PC-9 (cell line): ENCODE measurements at regions of chr3 and their contacts with region 1.

Region 1: DNA sequence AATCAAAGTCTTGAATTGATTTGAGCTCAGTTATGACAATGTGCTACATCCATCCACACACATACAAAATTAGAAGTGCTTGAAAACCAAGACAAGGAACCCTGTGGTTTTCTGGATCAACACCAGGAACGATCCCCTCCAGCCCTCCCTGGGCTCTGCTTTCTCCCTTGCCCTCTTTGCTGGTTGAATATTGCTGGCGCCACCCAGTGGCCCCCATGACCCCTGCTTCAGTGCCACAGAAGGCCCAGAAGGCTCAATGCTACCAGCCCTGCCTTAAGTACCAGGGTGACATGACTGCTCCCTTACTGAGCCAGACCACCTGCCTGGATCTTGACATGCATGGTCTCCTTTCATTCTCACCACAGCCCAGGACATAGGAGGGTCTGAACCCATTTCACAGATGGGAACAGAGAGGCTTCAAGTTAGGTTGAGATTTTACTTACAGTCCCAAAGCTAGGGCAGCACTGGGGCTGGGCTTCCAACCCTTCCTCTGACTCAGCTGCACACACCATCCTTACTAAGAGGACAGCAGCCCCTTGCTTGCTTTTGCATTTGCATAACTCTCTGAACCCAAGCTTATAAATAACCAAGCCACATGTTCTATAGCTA is 15.0 kb downstream of the IL12A start:
- DNase-seq: peak in 1 of 2 experiments; percentile 65
- H3K4me3 ChIP-seq: no peak overlapping the region
- H3K27ac ChIP-seq: no peak overlapping the region
- H3K4me1 ChIP-seq: no peaks in the 10 kb centered on the region
- H3K27me3 ChIP-seq: no peaks in the 10 kb centered on the region
- CTCF ChIP-seq: peak; percentile 77

Region 2: GRCh38 chr3:159616212-159616825 is 387.3 kb before region 1 on chr3:
- CTCF ChIA-PET with region 1: no interaction called
- POLR2A ChIA-PET with region 1: no interaction called
- intact Hi-C with region 1: loop called (anchors 1 kb)
- DNase-seq: peak; percentile 43 to 69
- H3K4me3 ChIP-seq: no peak overlapping the region
- H3K27ac ChIP-seq: no peak overlapping the region
- H3K4me1 ChIP-seq: peaks cover 16% of the 10 kb centered on the region
- H3K27me3 ChIP-seq: no peaks in the 10 kb centered on the region
- CTCF ChIP-seq: peak; percentile 80

Region 3: DNA sequence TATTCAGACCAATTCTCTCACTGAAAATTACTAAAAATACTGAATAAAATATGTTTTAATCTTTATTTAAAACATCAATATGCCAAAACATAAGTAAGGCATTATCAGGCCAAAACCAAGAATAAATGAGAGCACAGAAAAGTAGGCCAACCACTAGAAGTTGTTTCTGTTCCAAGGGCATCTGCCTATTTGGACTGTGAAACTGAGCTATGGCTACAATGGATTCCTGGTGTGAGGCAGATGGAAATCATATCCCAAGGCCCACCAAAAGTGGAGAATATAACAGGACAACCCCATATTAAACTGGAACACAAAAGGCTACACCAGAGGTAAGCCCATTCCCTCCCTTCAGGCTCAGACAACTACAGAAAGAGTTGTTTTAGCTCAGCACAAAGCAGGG is 317.8 kb before region 1 on chr3:
- CTCF ChIA-PET with region 1: no interaction called
- POLR2A ChIA-PET with region 1: no interaction called
- intact Hi-C with region 1: no loop called
- DNase-seq: no peak
- H3K4me3 ChIP-seq: no peak overlapping the region
- H3K27ac ChIP-seq: no peak overlapping the region
- H3K4me1 ChIP-seq: no peaks in the 10 kb centered on the region
- H3K27me3 ChIP-seq: no peaks in the 10 kb centered on the region
- CTCF ChIP-seq: no peak

Region 4: DNA sequence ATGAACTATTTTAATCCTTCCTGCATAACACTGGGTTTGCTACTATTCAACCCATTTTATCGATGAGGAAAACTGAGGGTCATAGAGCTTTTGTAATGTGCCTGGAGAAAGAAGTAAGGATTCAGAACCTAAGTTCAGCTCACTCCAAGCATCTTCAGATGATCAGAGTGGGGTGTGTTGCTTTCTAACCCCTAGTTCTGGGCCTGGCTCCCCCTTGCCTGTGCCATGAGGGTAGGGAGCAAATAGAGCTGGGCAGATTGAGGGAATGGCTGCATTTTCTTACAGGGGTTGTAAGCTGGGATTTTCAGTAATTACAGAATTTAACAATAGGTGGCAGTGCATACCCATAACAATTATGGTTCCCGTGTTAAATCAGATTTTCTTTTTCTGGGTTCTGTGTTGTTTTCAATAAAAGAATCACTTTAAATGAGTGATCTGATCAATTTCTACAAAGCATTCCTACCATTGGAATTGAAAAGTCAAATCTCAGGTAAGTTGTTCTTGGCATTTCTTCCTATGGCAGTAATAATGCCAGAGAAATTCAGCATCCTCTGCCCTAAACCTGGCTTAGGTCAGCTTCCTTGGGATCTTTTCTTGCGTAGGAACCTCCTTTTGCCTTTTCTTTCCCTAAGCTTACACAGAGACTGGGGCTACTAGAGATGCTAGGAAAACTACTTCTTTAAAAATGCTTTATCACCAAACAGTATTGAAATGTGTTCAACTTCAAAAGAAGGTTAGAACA is 118.8 kb before region 1 on chr3:
- CTCF ChIA-PET with region 1: interaction called, 70 read pairs
- POLR2A ChIA-PET with region 1: no interaction called
- intact Hi-C with region 1: loop called (anchors 1 kb)
- DNase-seq: peak; percentile 15 to 45
- H3K4me3 ChIP-seq: no peak overlapping the region
- H3K27ac ChIP-seq: no peak overlapping the region
- H3K4me1 ChIP-seq: no peaks in the 10 kb centered on the region
- H3K27me3 ChIP-seq: no peaks in the 10 kb centered on the region
- CTCF ChIP-seq: peak; percentile 85

Region 5: GRCh38 chr3:159929435-159930141 is 74.0 kb before region 1 on chr3:
- CTCF ChIA-PET with region 1: interaction called, 13 read pairs
- POLR2A ChIA-PET with region 1: no interaction called
- intact Hi-C with region 1: loop called (anchors 1 kb)
- DNase-seq: peak; percentile 51 to 93
- H3K4me3 ChIP-seq: peak overlapping the region; percentile 27; the same call in 1 of the 2 replicates
- H3K27ac ChIP-seq: peak overlapping the region; percentile 94
- H3K4me1 ChIP-seq: peaks cover 46% of the 10 kb centered on the region
- H3K27me3 ChIP-seq: no peaks in the 10 kb centered on the region
- CTCF ChIP-seq: peak; percentile 62

Region 6: GRCh38 chr3:159988617-159989271 is 14.9 kb before region 1 on chr3 and contains the start of gene IL12A:
- CTCF ChIA-PET with region 1: interaction called, 14 read pairs
- POLR2A ChIA-PET with region 1: interaction called, 16 read pairs
- intact Hi-C with region 1: no loop called
- DNase-seq: peak; percentile 58 to 79
- H3K4me3 ChIP-seq: peak within 1 kb of the TSS; percentile 96
- H3K27ac ChIP-seq: no peak within 1 kb of the TSS
- H3K4me1 ChIP-seq: peaks cover 23% of the 10 kb centered on the region
- H3K27me3 ChIP-seq: no peaks in the 10 kb centered on the region
- CTCF ChIP-seq: peak; percentile 98
- total RNA-seq, gene IL12A: 0.28 and 0.40 TPM in 2 replicates

Region 7: DNA sequence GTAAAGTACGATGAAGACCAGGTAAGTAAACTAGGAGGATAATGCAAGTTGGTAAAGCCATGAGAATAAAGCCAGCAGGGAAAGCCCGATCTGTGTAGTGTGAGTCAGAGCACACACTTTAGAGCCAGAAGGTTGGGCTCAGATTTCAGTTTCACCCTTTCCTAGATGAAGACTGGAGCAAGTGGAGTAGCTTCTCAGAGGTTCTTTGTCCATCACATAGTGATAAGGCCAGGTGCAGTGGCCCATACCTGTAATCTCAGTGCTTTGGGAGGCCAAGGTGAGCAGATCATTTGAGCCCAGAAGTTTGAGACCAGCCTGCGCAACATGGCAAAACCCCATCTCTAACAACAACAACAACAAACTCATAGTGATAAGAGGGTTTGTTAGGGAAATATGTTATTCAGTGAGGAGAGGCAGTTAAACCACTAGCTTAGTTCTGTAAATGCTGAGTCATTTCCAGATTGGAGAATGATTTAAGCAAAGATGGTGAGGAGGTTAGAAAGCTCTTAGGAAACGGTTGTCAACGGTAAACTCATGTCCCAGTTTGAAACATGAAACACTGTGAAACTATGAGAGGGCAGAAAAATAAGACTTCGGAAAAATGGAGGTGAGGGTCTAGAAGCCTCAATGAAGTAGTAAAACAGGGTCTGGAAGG is 24.0 kb after region 1 on chr3:
- CTCF ChIA-PET with region 1: interaction called, 10 read pairs
- POLR2A ChIA-PET with region 1: no interaction called
- intact Hi-C with region 1: no loop called
- DNase-seq: peak; percentile 33 to 56
- H3K4me3 ChIP-seq: no peak overlapping the region
- H3K27ac ChIP-seq: peak overlapping the region; percentile 63
- H3K4me1 ChIP-seq: peaks cover 12% of the 10 kb centered on the region
- H3K27me3 ChIP-seq: no peaks in the 10 kb centered on the region
- CTCF ChIP-seq: no peak